ENCODE measurements at regions of chr17 and their contacts with region 1.

Region 1: GRCh38 chr17:76278952-76279741 is 14.0 kb downstream of the UBALD2 start:
- DNase-seq: peak; percentile 85
- H3K4me3 ChIP-seq: no peak overlapping the region
- H3K27ac ChIP-seq: no peak overlapping the region
- H3K4me1 ChIP-seq: peaks cover 6% of the 10 kb centered on the region
- H3K27me3 ChIP-seq: no peaks in the 10 kb centered on the region
- CTCF ChIP-seq: peak; percentile 97 to 100 (median 98)
- POLR2A ChIP-seq: no peak

Region 2: DNA sequence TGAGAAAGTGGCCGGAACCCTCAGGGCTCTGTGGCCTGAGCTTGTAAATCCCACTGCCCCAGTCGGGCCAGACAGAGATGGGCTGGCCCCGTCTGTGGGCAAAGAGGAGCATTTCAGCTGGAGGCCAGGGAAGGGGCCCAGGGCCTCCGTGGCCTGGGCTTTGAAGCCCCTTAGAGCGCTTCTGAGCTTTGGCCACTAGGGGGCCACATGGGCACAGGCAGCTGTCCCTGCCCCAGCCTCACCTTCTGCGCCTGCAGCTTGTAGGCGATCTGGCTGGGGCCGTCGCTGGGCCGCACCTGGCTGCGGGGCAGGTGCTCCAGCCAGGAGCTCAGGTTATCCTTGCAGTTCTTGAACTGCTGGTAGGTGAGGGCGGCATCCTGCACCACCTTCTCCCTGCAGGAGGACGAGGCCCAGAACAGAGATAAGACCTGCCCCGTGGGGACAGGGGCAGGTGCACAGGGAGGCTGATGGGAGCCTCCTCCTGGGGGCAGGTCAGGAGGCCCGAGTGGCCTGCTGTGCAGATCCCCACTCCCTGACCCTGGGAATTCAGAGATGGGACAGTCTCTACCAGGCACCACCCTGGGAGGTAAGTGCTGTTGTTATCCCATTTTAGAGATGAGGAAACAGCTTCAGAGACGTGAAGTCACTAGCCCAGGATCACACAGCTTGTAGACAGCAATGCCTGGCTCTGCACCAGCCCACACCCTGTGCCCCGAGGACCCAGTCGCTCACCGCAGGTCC is 264.8 kb before region 1 on chr17:
- intact Hi-C with region 1: loop called (anchors 10 kb)
- DNase-seq: peak; percentile 69
- H3K4me3 ChIP-seq: no peak overlapping the region
- H3K27ac ChIP-seq: no peak overlapping the region
- H3K4me1 ChIP-seq: no peaks in the 10 kb centered on the region
- H3K27me3 ChIP-seq: no peaks in the 10 kb centered on the region
- CTCF ChIP-seq: peak; percentile 82 to 95 (median 91)
- POLR2A ChIP-seq: no peak

Region 3: GRCh38 chr17:76121932-76122430 is 157.2 kb before region 1 on chr17:
- intact Hi-C with region 1: loop called (anchors 1 kb)
- DNase-seq: no peak
- H3K4me3 ChIP-seq: peak overlapping the region; percentile 9 to 20
- H3K27ac ChIP-seq: no peak overlapping the region
- H3K4me1 ChIP-seq: peaks cover 6% of the 10 kb centered on the region
- H3K27me3 ChIP-seq: no peaks in the 10 kb centered on the region
- CTCF ChIP-seq: no peak
- POLR2A ChIP-seq: no peak

Region 4: GRCh38 chr17:76182016-76182764 is 97.0 kb before region 1 on chr17:
- intact Hi-C with region 1: loop called (anchors 2 kb)
- DNase-seq: peak; percentile 83
- H3K4me3 ChIP-seq: no peak overlapping the region
- H3K27ac ChIP-seq: no peak overlapping the region
- H3K4me1 ChIP-seq: no peaks in the 10 kb centered on the region
- H3K27me3 ChIP-seq: no peaks in the 10 kb centered on the region
- CTCF ChIP-seq: peak; percentile 74 to 92 (median 90)
- POLR2A ChIP-seq: no peak